Testis (tissue), 5 donors: ENCODE measurements at regions of chr11 and their contacts with region 1.

Region 1: DNA sequence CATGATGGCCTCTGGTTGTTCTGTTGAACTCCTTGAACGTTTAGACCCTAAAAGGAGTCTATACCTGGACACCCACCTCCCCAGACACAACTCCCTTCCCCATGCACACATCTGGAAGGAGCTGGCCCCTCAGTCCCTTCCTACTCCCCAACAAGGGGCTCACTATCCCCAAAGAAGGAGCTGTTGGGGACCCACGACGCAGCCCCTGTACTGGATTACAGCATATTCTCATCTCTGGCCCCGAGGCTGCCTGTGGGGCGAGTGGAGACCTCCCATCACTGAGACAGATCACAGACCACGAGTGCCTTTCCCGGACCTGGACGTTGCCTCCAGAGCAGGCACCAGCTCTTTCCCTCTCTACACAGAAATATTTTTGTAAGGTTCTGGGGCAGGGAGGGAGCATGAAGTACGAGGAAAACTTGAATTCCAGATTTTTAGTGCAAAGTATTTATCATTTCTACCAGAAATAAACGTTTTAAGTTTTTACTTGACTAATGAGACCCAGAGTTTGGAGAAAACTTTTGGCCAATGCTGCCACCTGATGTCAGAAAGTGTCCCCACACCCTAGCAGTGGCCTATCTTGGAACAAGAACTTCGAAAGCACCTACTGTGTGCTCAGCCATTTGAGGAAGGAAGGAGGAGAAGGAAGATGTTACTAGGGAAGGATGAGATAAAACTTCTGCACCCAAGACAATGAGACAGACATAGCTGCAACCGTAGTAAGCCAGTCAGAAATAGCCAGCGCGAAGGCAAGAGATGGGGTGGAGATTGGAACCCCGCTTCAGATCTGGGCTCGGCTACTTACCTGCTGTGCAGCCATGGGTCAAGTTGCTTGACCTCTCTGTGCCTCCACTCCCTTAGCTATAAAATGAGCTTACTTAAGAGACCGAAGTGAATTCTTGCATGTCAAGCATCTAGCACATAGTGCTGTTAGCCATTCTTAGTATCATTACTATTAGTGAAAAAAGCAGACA is 10.2 kb upstream of the POU2F3 start:
- DNase-seq: peak; percentile 29
- H3K4me3 ChIP-seq: no peak overlapping the region
- H3K27ac ChIP-seq: no peak overlapping the region
- H3K4me1 ChIP-seq: peaks cover 5% of the 10 kb centered on the region
- H3K27me3 ChIP-seq: no peaks in the 10 kb centered on the region
- CTCF ChIP-seq: peak; percentile 39 to 71 (median 66)
- POLR2A ChIP-seq: no peak

Region 2: GRCh38 chr11:120172054-120172911 is 57.5 kb before region 1 on chr11:
- intact Hi-C with region 1: loop called (anchors 5 kb)
- DNase-seq: peak; percentile 79
- H3K4me3 ChIP-seq: no peak overlapping the region
- H3K27ac ChIP-seq: no peak overlapping the region
- H3K4me1 ChIP-seq: peaks cover 4% of the 10 kb centered on the region
- H3K27me3 ChIP-seq: no peaks in the 10 kb centered on the region
- CTCF ChIP-seq: peak; percentile 79 to 83 (median 83)
- POLR2A ChIP-seq: no peak

Region 3: DNA sequence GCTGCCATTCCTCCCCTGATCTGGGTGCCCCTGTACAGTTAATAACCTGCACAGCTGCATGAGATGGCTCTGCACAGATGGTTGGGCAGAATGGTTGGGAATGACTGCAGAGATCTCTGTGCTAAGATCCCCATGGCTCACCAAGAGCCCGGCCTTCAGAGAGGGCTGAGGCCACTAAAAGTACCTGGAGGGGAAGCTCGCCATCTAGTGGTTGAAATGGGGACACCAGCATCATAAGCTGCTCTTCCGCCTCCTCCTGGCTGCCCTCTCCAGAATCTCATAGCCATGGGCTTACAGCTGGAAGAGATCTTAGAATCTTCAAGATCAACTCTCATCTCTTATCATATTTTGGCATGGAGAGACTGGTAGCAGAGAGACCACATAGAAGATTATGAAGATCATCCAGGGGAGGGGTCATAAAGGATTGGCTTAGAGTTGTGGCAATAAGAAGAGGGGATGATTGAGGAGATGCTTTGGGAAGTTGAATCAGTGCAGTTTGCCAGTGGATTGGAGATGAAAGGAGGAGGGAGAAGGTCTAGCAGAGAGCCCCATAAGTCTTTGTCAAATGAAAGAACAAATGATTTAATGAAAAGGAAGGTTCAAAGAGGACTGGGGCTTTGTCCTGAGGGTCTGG is 73.4 kb after region 1 on chr11:
- intact Hi-C with region 1: loop called (anchors 2 kb)
- DNase-seq: peak; percentile 84
- H3K4me3 ChIP-seq: no peak overlapping the region
- H3K27ac ChIP-seq: no peak overlapping the region
- H3K4me1 ChIP-seq: no peaks in the 10 kb centered on the region
- H3K27me3 ChIP-seq: no peaks in the 10 kb centered on the region
- CTCF ChIP-seq: peak; percentile 70 to 82 (median 77)
- POLR2A ChIP-seq: no peak